ENCODE measurements at regions of chr15 and their contacts with region 1.

Region 1: GRCh38 chr15:69743091-69743490 is 290.5 kb downstream of the RPLP1 start:
- DNase-seq: no peak
- ATAC-seq: peak; percentile 83
- H3K4me3 Mint-ChIP-seq: no peak overlapping the region
- H3K27ac Mint-ChIP-seq: no peak overlapping the region
- H3K4me1 Mint-ChIP-seq: peaks cover 24% of the 10 kb centered on the region
- H3K27me3 Mint-ChIP-seq: peaks cover 12% of the 10 kb centered on the region

Region 2: DNA sequence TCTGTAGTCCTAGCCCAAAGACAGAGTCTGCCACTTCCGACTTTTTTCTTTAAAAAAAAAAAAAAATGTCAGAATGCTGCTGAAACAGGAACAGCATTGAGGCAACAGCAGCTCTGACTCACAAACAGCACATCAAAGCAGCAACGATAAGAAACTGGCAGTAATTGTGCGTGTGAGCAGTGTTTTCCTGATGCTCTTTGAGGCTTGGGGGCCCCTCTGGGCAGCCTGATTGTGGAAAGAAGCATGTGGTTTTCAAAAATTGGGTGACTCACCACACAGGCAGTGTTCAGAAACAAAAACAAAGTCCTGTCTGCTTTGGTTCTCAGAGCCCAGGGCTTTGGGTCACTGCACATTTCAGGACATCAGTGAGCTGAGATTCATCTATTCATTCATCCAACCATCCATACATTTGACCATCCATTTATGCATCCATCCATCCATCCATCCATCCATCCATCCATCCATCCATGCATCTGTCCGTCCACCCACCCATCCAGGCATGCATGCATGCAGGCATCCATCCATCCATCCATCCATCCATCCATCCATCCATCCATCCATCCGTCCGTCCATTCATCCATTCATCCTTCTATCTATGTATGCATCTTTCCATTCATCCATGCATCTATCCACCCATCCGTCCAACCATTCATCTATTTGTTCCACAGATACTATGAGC is 17.9 kb after region 1 on chr15:
- CTCF ChIA-PET with region 1: interaction called, 11 read pairs
- POLR2A ChIA-PET with region 1: interaction called, 6 read pairs
- intact Hi-C with region 1: no loop called
- DNase-seq: peak; percentile 89
- ATAC-seq: peak; percentile 42
- H3K4me3 Mint-ChIP-seq: peak overlapping the region; percentile 25
- H3K27ac Mint-ChIP-seq: peak overlapping the region; percentile 94
- H3K4me1 Mint-ChIP-seq: peaks cover 72% of the 10 kb centered on the region
- H3K27me3 Mint-ChIP-seq: no peaks in the 10 kb centered on the region

Region 3: DNA sequence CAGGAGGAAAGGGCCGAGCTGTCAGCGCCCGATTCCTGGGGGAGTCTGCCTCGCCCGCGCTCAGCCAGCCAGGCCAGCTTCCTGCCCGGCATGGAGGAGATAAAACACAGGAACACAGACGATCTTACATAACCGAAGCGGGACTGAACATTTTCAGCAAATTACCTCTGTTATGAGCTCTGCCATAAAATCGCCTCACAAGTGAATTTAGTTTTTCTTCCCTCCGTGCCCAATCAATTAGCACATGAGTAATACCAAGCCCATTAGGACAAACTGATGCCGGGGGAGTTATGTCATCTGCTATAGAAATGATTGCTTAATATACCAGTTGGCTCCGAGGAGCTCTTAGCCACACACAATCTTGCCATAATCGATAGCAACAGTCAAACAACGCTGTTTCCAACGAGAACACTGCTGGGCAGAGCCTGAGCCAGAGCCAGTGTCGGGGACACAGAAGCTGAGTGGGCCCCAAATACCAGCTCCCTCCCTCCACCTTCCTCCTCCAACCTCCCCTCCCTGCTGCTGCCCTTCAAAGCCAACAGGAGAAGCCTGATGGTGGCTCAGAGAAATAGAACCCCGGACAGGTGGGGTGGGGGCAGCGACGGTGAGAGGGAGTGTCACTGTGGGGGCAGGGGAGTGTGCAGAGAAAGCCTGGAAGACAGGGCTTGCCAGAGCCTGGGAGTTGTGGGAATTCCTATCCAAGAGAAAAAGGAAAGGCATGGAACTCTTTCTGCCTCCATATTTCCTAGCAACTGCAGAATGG is 634.0 kb after region 1 on chr15:
- CTCF ChIA-PET with region 1: no interaction called
- POLR2A ChIA-PET with region 1: no interaction called
- intact Hi-C with region 1: no loop called
- DNase-seq: no peak
- ATAC-seq: no peak
- H3K4me3 Mint-ChIP-seq: no peak overlapping the region
- H3K27ac Mint-ChIP-seq: no peak overlapping the region
- H3K4me1 Mint-ChIP-seq: no peaks in the 10 kb centered on the region
- H3K27me3 Mint-ChIP-seq: peaks cover 11% of the 10 kb centered on the region

Measured in activated CD4-positive, alpha-beta T cell treated with anti-CD3 and anti-CD28 coated beads for 36 hours (primary cell).